ENCODE measurements at regions of chr15 and their contacts with region 1.

Region 1: DNA sequence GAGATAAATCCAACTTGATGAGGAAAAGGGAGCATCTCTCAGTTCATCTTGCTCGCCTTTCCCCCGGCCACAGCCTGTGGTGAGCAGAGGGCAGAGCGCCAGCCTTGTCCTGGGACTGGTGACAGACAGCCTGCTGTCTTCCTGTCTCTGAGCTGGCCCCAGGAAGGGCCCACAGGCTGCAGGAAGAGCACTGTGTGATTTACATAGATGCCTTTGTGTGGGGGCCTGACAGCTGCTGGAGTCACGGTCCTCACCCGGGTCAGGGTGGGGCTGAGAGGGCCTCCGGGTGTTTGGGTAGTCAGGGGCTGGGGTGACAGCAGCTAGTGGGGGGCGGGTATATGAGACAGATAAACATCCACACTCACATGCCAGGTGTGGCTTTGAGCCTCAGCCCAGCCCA is 29.3 kb downstream of the PLA2G4D start:
- DNase-seq: no peak
- ATAC-seq: peak; percentile 40
- H3K4me3 ChIP-seq: no peak overlapping the region
- H3K27ac ChIP-seq: no peak overlapping the region
- H3K4me1 ChIP-seq: no peaks in the 10 kb centered on the region
- H3K27me3 ChIP-seq: no peaks in the 10 kb centered on the region
- CTCF ChIP-seq: no peak

Region 2: GRCh38 chr15:42133886-42134502 is 69.0 kb after region 1 on chr15:
- intact Hi-C with region 1: loop called (anchors 5 kb)
- DNase-seq: peak; percentile 89
- ATAC-seq: peak; percentile 81
- H3K4me3 ChIP-seq: no peak overlapping the region
- H3K27ac ChIP-seq: no peak overlapping the region
- H3K4me1 ChIP-seq: no peaks in the 10 kb centered on the region
- H3K27me3 ChIP-seq: peaks cover 11% of the 10 kb centered on the region
- CTCF ChIP-seq: peak; percentile 62

Region 3: GRCh38 chr15:42286445-42287029 is 221.5 kb after region 1 on chr15:
- intact Hi-C with region 1: no loop called
- DNase-seq: no peak
- ATAC-seq: peak; percentile 46
- H3K4me3 ChIP-seq: no peak overlapping the region
- H3K27ac ChIP-seq: no peak overlapping the region
- H3K4me1 ChIP-seq: no peaks in the 10 kb centered on the region
- H3K27me3 ChIP-seq: no peaks in the 10 kb centered on the region
- CTCF ChIP-seq: no peak

Measured in upper lobe of right lung (tissue), 1 donor.